ENCODE measurements at regions of chr2 and their contacts with region 1.

Region 1: DNA sequence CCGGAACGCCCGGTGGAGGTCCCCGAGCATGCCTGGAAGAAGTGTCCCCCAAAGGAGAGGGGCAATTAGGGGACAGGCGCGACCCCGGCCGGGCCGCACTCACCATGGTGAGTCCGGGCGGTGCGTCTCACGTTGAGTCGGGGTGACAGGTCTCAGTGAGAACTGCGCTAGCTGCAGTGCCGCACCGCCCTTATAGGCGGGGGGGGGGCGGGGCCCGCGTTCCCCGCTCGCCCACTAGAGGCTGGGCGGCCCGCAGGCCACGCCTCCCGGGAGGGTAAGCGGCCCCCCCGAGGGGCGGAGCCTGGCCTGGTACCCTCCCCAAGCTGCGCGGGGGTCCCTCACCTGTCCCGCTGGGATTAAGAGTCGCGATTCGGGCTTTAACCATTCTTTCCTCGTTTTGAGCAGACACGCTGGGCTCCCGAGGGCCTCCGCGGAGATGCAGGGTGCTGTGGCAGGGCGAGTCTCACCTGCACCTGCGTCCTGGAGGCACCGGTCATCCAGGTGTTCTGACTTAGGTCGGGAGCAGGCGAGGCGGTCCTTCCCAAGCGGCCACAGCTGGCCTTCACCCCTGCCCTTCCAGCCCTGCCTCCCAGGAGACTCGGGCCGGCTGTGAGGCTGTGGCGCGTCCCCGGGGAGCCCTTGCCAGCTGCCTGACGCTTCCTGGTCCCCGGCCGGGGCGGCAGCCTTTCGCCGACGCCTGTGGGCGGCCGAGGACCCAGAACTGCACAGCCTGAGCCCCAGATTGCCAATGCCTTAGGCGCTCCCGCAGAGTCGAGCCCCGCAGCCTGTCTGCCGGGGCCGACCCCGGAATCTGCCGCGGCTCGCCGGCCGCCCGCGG is at the start of gene TUBA4A:
- DNase-seq: peak; percentile 94
- ATAC-seq: peak; percentile 63
- H3K4me3 Mint-ChIP-seq: peak within 1 kb of the TSS; percentile 89
- H3K27ac Mint-ChIP-seq: peak within 1 kb of the TSS; percentile 93
- H3K4me1 Mint-ChIP-seq: peaks cover 54% of the 10 kb centered on the region
- H3K27me3 Mint-ChIP-seq: no peaks in the 10 kb centered on the region
- total RNA-seq, gene TUBA4A: 210 to 369 TPM

Region 2: DNA sequence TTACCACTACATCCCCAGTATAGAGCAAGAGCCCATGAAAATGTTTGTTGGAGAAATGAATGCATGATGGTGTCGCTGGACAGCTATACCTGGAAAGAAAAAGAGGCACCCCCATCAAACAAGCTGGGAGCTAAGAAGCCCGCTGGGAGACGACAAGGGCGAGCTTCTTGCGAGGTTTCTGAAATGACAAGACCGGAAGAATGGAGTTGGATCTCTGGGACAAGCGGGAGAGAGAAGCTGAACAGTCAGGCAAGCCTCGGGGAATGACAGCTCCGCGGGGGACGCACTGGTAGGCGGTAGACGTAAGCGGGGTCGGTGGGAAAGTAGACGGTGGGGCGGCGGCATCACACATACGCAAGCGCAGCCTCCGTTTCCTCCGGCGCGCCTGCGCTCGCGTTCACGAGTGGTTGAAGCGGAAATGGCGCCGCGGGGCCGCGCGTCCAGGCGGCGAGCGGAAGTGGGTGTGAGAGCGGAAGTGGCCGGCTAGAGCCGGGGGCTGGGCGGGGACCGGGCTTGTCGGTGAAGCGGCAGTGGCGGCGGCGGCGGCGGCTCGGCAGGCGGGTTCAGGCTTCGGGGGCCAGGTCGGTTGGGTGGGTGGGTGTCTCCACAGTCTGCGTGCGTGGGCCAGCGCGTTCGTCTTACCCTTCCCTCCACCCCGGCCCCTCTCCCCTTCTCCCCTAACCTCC is 1037.2 kb before region 1 on chr2 and contains the start of gene ARPC2:
- CTCF ChIA-PET with region 1: no interaction called
- POLR2A ChIA-PET with region 1: interaction called, 10 read pairs
- intact Hi-C with region 1: no loop called
- DNase-seq: peak; percentile 96
- ATAC-seq: peak; percentile 64
- H3K4me3 Mint-ChIP-seq: peak within 1 kb of the TSS; percentile 81
- H3K27ac Mint-ChIP-seq: peak within 1 kb of the TSS; percentile 96
- H3K4me1 Mint-ChIP-seq: peaks cover 34% of the 10 kb centered on the region
- H3K27me3 Mint-ChIP-seq: no peaks in the 10 kb centered on the region
- total RNA-seq, gene ARPC2: 563 to 632 TPM

Region 3: GRCh38 chr2:218908721-218909619 is 345.0 kb before region 1 on chr2:
- CTCF ChIA-PET with region 1: no interaction called
- POLR2A ChIA-PET with region 1: no interaction called
- intact Hi-C with region 1: loop called in 1 of 2 experiments (anchors 1 kb)
- DNase-seq: peak; percentile 97
- ATAC-seq: peak; percentile 98
- H3K4me3 Mint-ChIP-seq: peak overlapping the region; percentile 85
- H3K27ac Mint-ChIP-seq: peak overlapping the region; percentile 83
- H3K4me1 Mint-ChIP-seq: peaks cover 13% of the 10 kb centered on the region
- H3K27me3 Mint-ChIP-seq: peaks cover 16% of the 10 kb centered on the region

Region 4: DNA sequence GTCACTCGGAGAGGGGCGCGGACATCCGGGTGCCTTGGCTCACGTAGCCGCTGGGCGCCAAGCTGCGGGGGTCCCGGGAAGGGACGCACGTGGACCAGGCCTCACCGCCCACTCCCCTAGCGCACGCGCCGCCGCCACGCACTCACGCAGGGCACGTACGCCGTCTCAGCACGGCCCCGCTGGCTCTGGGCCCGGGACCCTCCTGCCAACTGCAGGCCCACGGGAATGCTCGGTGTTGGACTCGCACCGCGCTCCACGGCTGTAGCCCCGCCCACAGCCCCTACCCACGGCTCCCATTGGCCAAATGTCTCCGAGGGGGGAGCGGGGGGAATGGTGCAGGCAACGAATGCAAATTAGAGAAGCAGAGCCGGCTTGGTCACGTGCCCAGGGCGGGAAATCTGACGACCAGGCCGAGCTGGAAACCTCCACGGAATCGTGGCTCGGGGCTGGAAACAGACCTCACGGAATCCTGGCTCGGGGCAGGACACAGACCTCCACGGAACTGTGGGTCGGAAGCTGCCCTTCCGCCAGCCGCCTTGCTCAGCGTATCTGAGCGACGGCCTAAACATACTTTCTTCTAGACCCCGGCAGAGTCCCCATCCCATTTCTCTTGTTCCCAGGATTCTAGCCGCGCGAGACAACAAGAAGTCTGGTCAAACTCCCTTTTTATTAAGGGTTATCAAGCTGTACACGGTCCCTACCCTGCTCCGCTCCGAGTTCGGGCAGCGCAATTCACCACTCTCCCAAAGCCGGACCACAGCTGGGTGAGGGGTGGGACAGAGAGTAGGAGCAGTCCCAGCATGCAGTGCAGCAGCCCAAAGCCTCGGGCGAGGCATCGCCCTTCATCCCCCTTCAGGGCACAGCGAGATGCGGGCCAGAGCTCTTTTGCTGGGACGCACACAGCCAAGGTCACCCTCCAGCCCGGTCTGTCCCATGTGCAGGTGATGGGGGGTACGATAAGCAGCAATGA is 35.0 kb before region 1 on chr2 and contains the start of gene ABCB6:
- CTCF ChIA-PET with region 1: interaction called, 15 read pairs
- POLR2A ChIA-PET with region 1: interaction called, 5 read pairs
- intact Hi-C with region 1: loop called in 1 of 2 experiments (anchors 1 kb)
- DNase-seq: peak; percentile 94
- ATAC-seq: peak; percentile 89
- H3K4me3 Mint-ChIP-seq: peak within 1 kb of the TSS; percentile 83
- H3K27ac Mint-ChIP-seq: peak within 1 kb of the TSS; percentile 74
- H3K4me1 Mint-ChIP-seq: peaks cover 24% of the 10 kb centered on the region
- H3K27me3 Mint-ChIP-seq: no peaks in the 10 kb centered on the region
- total RNA-seq, gene ABCB6: 18.2 to 21.9 TPM

Region 5: GRCh38 chr2:219229305-219230058 is 24.5 kb before region 1 on chr2 and contains the starts of genes ANKZF1 and ATG9A:
- CTCF ChIA-PET with region 1: interaction called, 8 read pairs
- POLR2A ChIA-PET with region 1: interaction called, 24 read pairs
- intact Hi-C with region 1: loop called (anchors 1 kb)
- DNase-seq: peak; percentile 99
- ATAC-seq: peak; percentile 98
- H3K4me3 Mint-ChIP-seq: peak within 1 kb of the TSS; percentile 98
- H3K27ac Mint-ChIP-seq: peak within 1 kb of the TSS; percentile 98
- H3K4me1 Mint-ChIP-seq: peaks cover 34% of the 10 kb centered on the region
- H3K27me3 Mint-ChIP-seq: no peaks in the 10 kb centered on the region
- total RNA-seq, gene ANKZF1: 140 to 166 TPM
- total RNA-seq, gene ATG9A: 43.5 to 45.6 TPM

Region 6: GRCh38 chr2:219509780-219510511 is 256.0 kb after region 1 on chr2:
- CTCF ChIA-PET with region 1: no interaction called
- POLR2A ChIA-PET with region 1: interaction called, 13 read pairs
- intact Hi-C with region 1: no loop called
- DNase-seq: peak; percentile 77
- ATAC-seq: peak; percentile 91
- H3K4me3 Mint-ChIP-seq: no peak overlapping the region
- H3K27ac Mint-ChIP-seq: no peak overlapping the region
- H3K4me1 Mint-ChIP-seq: peaks cover 20% of the 10 kb centered on the region
- H3K27me3 Mint-ChIP-seq: peaks cover 44% of the 10 kb centered on the region